ENCODE measurements at regions of chr1 and their contacts with region 1.

Region 1: GRCh38 chr1:160219062-160219929 is 14.1 kb downstream of the PEA15 start:
- DNase-seq: no peak

Region 2: DNA sequence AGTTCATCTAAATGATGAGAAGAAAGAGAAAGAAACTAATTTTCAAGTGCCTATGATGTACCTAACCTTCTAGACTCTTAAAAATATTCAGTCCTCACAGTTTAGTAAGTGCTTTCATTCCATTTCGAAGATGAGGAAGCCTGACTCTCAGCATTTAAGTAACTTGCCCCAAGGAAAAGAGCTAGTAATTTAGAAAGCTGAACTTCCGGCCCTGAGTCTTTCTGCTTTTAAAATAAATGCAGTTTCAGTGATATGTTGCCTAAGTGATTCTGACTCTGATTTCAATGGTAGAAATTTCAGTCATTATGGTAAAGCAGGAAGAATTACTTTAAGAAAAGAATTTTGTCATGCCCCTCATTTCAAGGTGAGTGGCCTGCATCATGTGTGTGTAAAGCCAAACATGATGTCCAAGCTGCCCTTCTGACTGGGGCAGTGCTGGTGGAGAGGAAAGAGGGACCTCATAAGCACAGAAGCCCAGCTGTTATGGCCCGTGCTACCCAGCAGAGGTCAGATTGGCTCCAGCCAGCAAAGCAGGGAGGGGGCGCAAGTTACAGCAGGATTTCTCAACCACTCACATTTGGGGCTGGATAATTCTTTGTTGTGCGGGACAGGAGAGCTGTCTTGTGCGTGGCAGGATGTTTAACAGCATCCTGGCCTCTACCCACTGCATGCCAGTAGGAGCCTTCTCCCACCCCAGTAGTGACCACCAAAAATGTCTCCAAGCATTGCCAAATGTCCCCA is 57.2 kb before region 1 on chr1:
- intact Hi-C with region 1: loop called (anchors 1 kb)
- DNase-seq: no peak

Region 3: GRCh38 chr1:161098210-161099068 is 879.1 kb after region 1 on chr1 and contains the start of gene KLHDC9:
- intact Hi-C with region 1: no loop called
- DNase-seq: peak; percentile 83
- total RNA-seq, gene KLHDC9: 10.7 TPM